ENCODE measurements at regions of chr15 and their contacts with region 1.

Region 1: GRCh38 chr15:58227706-58228543 is 89.7 kb downstream of the AQP9 start:
- DNase-seq: peak; percentile 84 to 88
- ATAC-seq: peak; percentile 69
- H3K4me3 ChIP-seq: no peak overlapping the region
- H3K27ac ChIP-seq: no peak overlapping the region
- H3K4me1 ChIP-seq: peaks cover 3 to 4% of the 10 kb centered on the region in 2 donors
- H3K27me3 ChIP-seq: no peaks in the 10 kb centered on the region

Region 2: DNA sequence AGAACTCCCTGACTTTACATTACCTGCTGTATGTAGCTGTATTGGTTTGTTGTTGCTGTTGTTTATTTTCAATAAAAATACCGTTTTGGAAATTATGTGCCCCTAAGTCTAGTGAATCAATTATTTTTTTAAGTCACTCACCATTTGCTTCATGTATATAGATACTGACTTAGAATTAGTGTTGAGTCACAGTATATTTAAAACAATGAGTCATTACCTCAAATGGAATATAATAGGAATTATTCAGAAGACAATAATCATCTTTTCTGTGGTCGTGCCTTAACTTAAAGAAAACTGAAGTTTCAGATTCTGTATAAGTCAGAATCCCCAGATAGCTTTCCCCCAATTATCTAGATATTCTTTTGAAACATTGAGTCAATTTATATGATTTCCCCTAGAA is 141.4 kb before region 1 on chr15:
- intact Hi-C with region 1: no loop called
- DNase-seq: no peak
- ATAC-seq: no peak
- H3K4me3 ChIP-seq: no peak overlapping the region
- H3K27ac ChIP-seq: no peak overlapping the region
- H3K4me1 ChIP-seq: no peaks in the 10 kb centered on the region
- H3K27me3 ChIP-seq: peaks cover 0 to 2% of the 10 kb centered on the region in 2 donors

Region 3: DNA sequence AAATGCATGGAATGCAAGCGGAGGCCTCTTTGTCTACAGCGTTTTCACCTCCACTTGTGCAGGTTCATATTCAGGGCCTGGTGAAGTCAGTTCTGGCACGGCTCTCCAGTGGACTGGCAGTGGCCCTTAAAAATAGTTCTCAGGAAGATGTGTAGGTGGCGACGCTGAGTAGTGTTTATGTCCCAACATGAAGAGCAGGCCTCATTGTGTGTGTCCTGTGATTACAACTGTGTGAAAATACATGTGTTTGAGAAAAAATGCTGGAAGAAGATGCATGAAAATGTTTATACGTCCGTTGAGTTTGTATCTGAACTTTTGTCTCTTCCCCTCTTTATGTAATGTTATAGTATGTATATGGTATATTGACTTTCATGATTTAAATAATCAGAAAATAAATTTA is 211.0 kb after region 1 on chr15:
- intact Hi-C with region 1: no loop called
- DNase-seq: no peak
- ATAC-seq: no peak
- H3K4me3 ChIP-seq: no peak overlapping the region
- H3K27ac ChIP-seq: no peak overlapping the region
- H3K4me1 ChIP-seq: peaks cover 0 to 5% of the 10 kb centered on the region in 2 donors
- H3K27me3 ChIP-seq: no peaks in the 10 kb centered on the region

Region 4: DNA sequence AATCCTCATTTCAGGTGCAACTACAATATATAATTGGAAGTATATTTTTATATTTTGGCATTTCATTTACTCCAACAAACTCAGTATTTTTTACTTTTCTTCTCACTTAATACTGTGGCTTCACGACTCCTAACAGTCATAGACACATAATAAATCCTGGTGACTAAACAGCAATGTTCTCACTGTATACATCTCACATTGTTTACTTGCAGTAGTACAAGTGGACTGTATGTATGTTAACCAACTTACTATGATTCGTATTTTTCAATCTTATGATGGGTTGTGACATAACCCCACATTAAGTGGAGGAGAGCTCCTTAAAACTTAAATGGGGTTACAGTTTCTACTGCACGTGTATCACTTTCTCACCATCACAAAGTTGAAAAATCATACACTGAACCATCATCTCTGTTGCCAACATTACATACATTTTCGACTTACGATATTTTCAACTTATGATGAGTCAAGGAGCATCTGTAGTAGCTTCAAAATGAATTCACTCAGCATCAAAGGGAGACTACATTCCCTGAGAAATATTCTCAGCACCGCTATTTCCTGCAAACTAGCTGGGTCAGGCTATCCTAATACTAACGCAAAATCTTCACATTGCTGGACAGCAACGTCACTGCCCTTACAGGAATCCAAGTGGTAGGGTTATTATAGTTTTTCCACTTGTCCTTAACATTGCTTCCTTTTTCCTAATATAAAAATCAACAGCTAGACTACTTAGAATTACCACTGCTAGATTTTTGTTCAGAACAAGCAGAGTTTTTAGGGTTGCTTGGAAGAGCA is 514.3 kb after region 1 on chr15:
- intact Hi-C with region 1: loop called in 1 of 2 experiments (anchors 5 kb)
- DNase-seq: no peak
- ATAC-seq: peak; percentile 66
- H3K4me3 ChIP-seq: no peak overlapping the region
- H3K27ac ChIP-seq: no peak overlapping the region
- H3K4me1 ChIP-seq: peaks cover 0 to 2% of the 10 kb centered on the region in 2 donors
- H3K27me3 ChIP-seq: no peaks in the 10 kb centered on the region

Measured in aorta (tissue), 5 donors.